Adrenal gland (tissue), 19 donors: ENCODE measurements at regions of chr19 and their contacts with region 1.

Region 1: GRCh38 chr19:732148-733069 is 18.5 kb upstream of the MISP start:
- DNase-seq: no peak
- H3K4me3 ChIP-seq: no peak overlapping the region
- H3K27ac ChIP-seq: no peak overlapping the region
- H3K4me1 ChIP-seq: no peaks in the 10 kb centered on the region
- H3K27me3 ChIP-seq: no peaks in the 10 kb centered on the region
- CTCF ChIP-seq: no peak
- POLR2A ChIP-seq: no peak

Region 2: GRCh38 chr19:664913-665443 is 67.4 kb before region 1 on chr19:
- intact Hi-C with region 1: loop called (anchors 2 to 5 kb)
- DNase-seq: peak; percentile 73 to 90 (median 82)
- H3K4me3 ChIP-seq: peak overlapping the region in 1 of 4 donors; percentile 21
- H3K27ac ChIP-seq: peak overlapping the region in 1 of 5 donors; percentile 23
- H3K4me1 ChIP-seq: peaks cover 31 to 41% of the 10 kb centered on the region in 2 donors
- H3K27me3 ChIP-seq: no peaks in the 10 kb centered on the region
- CTCF ChIP-seq: peak; percentile 88 to 98 (median 96)
- POLR2A ChIP-seq: no peak